Activated naive CD4-positive, alpha-beta T cell treated with anti-CD3 and anti-CD28 coated beads, Interleukin-2, amount 10 ng/mL, durations not matched to agents 7 days and 5 days (primary cell): ENCODE measurements at regions of chr1 and their contacts with region 1.

Region 1: GRCh38 chr1:15741183-15741850 is 982 bp upstream of the TMEM82 start:
- DNase-seq: peak; percentile 84
- H3K4me3 Mint-ChIP-seq: no peak overlapping the region
- H3K27ac Mint-ChIP-seq: no peak overlapping the region
- H3K4me1 Mint-ChIP-seq: peaks cover 7% of the 10 kb centered on the region
- H3K27me3 Mint-ChIP-seq: peaks cover 18% of the 10 kb centered on the region

Region 2: GRCh38 chr1:15598436-15598835 is 142.9 kb before region 1 on chr1:
- CTCF ChIA-PET with region 1: interaction called, 60 read pairs
- DNase-seq: no peak
- H3K4me3 Mint-ChIP-seq: no peak overlapping the region
- H3K27ac Mint-ChIP-seq: no peak overlapping the region
- H3K4me1 Mint-ChIP-seq: peaks cover 8% of the 10 kb centered on the region
- H3K27me3 Mint-ChIP-seq: peaks cover 28% of the 10 kb centered on the region